Common myeloid progenitor, CD34-positive (primary cell): ENCODE measurements at regions of chr5 and their contacts with region 1.

Region 1: DNA sequence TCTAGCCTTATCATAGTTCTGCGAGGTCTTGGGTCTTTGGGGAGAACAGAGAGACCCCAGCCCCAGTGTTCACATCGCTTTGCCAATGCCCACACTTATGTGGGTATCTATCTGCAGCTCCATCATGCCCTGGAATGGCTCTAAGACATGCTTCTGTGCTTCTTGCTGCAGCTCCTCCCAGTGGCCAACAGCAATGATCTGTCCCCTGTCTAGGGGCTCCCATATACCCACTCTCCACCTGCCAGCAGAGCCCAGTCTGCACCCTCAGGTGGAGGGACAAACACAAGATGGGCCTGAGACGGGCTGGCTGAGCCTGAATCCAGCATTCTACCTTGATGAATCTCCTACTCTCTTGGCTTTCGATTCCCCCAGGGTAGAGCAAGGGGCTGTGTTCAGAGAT is 14.6 kb upstream of the DAP start:
- DNase-seq: peak; percentile 3 to 29 (median 22)
- H3K4me3 ChIP-seq: no peak overlapping the region
- H3K27ac ChIP-seq: no peak overlapping the region
- H3K4me1 ChIP-seq: no peaks in the 10 kb centered on the region
- H3K27me3 ChIP-seq: no peaks in the 10 kb centered on the region

Region 2: DNA sequence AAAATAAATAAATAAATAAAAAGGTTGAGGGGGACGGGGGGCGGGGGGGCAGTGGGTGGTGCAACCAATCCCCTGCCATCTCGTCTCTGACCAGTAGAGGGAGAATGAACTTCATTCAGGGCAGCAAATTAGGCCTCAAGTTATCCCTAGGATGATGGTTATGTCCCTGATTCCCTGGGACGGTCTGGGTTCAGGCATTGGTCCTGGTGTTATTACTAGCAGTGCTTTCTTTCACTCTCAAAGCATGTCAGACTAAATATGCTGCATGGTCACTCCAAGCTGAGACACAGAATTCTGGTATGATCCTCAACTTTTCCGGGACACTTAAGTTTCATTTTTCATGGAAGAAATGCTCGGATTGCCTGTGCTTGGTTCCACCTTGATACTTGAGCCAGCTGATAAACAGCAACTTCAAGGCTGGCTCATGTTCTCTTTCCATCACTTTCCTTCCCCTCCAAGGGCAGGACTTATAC is 74.0 kb before region 1 on chr5:
- CTCF ChIA-PET with region 1: interaction called, 13 read pairs
- POLR2A ChIA-PET with region 1: no interaction called
- DNase-seq: peak; percentile 44 to 70 (median 63)
- H3K4me3 ChIP-seq: no peak overlapping the region
- H3K27ac ChIP-seq: no peak overlapping the region
- H3K4me1 ChIP-seq: peaks cover 5 to 20% (median 12%) of the 10 kb centered on the region in 4 experiments
- H3K27me3 ChIP-seq: no peaks in the 10 kb centered on the region

Region 3: DNA sequence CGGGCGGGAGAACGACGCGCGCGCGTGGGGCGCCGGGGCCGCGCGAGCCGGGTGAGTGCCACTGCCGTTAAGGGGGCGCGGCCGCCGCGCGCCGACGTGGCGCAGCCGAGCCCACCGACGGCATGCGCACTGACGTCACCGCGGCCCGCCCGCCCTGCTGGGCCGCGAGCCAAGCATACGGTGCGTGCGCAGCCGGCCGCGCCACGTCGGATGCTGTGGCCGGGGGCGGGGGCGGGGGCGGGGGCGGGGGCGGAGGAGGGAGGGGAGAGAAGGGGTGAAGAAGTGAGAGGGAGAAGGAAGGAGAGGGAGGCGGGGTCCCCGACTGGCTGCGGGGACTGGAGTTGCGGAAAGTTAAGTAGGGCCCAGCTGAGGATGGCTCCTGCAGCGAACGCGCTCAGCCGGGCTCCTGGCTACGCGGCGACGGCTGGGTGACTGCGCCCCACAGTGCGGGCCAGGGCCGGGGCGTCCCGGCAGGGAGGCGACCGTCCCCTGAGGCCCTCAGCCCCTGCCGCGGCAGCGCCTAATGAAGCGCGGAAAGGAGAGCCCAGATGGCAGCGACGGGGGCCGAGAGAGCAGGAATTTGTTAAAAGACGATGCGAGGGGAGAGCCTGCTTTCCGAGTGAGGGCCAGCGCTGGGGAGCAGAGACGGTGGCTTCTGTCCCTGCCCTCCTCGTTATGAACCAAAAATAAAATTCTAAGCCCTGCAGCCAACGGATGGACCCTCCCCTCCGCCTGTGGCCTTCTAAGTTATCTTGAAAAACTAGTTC is 14.3 kb before region 1 on chr5 and contains the start of gene DAP:
- CTCF ChIA-PET with region 1: interaction called, 11 read pairs
- POLR2A ChIA-PET with region 1: no interaction called
- DNase-seq: peak; percentile 90 to 96 (median 94)
- H3K4me3 ChIP-seq: peak within 1 kb of the TSS; percentile 67 to 86 (median 78)
- H3K27ac ChIP-seq: peak within 1 kb of the TSS; percentile 53 to 85
- H3K4me1 ChIP-seq: peaks cover 6 to 55% (median 37%) of the 10 kb centered on the region in 4 experiments
- H3K27me3 ChIP-seq: no peaks in the 10 kb centered on the region